ENCODE measurements at regions of chr3 and their contacts with region 1.

Region 1: DNA sequence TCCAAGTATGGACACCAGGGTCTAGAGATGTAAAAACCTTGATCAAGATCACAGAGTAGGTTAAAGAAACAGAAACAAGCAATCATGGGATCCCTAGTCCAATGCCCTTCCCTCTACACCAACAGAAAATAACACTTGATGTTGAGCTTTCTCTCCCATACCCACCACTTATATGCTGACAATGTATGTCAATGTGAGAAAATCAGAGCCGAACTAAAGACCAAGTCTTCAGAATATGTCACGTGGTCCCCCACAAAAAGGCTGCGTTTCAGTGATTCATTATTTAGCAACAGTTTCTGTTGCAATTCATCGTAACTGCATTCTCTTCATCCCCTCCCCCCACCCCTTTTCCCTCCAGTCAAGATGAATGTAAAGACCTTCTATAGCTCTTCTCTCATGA is 278.9 kb upstream of the STT3B start:
- DNase-seq: no peak
- H3K4me3 Mint-ChIP-seq: no peak overlapping the region
- H3K27ac Mint-ChIP-seq: peak overlapping the region; percentile 89
- H3K4me1 Mint-ChIP-seq: peaks cover 64% of the 10 kb centered on the region
- H3K27me3 Mint-ChIP-seq: peaks cover 3% of the 10 kb centered on the region

Region 2: DNA sequence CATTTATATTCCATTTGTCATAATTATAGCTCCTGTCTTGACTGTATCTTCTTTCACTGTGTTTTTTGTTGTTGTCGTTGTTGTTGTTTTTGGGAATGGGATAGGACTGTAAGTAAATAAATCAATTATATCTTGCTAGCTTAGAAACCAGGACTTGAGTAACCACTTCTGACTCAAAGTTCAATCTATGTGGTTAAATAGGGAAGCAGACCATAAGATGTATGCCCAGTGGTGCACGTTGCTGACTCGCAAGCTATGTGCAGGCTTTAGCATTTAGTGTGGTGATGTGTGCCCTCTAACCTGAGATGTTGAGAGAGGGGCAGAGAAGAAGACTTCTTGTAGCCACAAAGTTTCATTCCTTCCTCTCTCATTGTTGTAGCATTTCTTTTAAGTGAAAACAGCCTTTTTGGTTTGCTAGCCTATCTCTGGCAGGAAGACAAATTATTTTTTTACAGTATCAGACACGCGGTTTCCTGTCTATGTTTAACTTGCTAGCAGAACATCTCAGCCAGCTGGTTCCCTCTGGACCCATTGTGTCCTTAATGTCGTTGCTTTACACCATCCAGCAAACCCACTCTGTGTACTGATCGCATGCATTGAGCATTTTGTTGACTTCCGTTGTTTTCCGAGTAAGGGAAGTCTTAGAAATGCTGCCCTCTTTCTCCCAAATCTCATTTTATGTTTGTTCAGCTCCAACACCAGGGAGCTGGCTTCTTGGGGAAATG is 595.3 kb before region 1 on chr3:
- intact Hi-C with region 1: loop called (anchors 1 kb)
- DNase-seq: no peak
- H3K4me3 Mint-ChIP-seq: peak overlapping the region; percentile 85
- H3K27ac Mint-ChIP-seq: peak overlapping the region; percentile 96
- H3K4me1 Mint-ChIP-seq: peaks cover 97% of the 10 kb centered on the region
- H3K27me3 Mint-ChIP-seq: no peaks in the 10 kb centered on the region

Region 3: GRCh38 chr3:31213869-31214486 is 39.8 kb before region 1 on chr3:
- intact Hi-C with region 1: loop called (anchors 1 kb)
- DNase-seq: peak; percentile 53
- H3K4me3 Mint-ChIP-seq: peak overlapping the region; percentile 43
- H3K27ac Mint-ChIP-seq: peak overlapping the region; percentile 81
- H3K4me1 Mint-ChIP-seq: peaks cover 94% of the 10 kb centered on the region
- H3K27me3 Mint-ChIP-seq: no peaks in the 10 kb centered on the region

Region 4: GRCh38 chr3:31242026-31242960 is 11.5 kb before region 1 on chr3:
- intact Hi-C with region 1: loop called (anchors 1 kb)
- DNase-seq: no peak
- H3K4me3 Mint-ChIP-seq: no peak overlapping the region
- H3K27ac Mint-ChIP-seq: peak overlapping the region; percentile 86
- H3K4me1 Mint-ChIP-seq: peaks cover 23% of the 10 kb centered on the region
- H3K27me3 Mint-ChIP-seq: no peaks in the 10 kb centered on the region

Region 5: GRCh38 chr3:31356941-31357340 is 103.2 kb after region 1 on chr3:
- intact Hi-C with region 1: loop called (anchors 1 kb)
- DNase-seq: no peak
- H3K4me3 Mint-ChIP-seq: no peak overlapping the region
- H3K27ac Mint-ChIP-seq: peak overlapping the region; percentile 64
- H3K4me1 Mint-ChIP-seq: peaks cover 39% of the 10 kb centered on the region
- H3K27me3 Mint-ChIP-seq: no peaks in the 10 kb centered on the region

Region 6: DNA sequence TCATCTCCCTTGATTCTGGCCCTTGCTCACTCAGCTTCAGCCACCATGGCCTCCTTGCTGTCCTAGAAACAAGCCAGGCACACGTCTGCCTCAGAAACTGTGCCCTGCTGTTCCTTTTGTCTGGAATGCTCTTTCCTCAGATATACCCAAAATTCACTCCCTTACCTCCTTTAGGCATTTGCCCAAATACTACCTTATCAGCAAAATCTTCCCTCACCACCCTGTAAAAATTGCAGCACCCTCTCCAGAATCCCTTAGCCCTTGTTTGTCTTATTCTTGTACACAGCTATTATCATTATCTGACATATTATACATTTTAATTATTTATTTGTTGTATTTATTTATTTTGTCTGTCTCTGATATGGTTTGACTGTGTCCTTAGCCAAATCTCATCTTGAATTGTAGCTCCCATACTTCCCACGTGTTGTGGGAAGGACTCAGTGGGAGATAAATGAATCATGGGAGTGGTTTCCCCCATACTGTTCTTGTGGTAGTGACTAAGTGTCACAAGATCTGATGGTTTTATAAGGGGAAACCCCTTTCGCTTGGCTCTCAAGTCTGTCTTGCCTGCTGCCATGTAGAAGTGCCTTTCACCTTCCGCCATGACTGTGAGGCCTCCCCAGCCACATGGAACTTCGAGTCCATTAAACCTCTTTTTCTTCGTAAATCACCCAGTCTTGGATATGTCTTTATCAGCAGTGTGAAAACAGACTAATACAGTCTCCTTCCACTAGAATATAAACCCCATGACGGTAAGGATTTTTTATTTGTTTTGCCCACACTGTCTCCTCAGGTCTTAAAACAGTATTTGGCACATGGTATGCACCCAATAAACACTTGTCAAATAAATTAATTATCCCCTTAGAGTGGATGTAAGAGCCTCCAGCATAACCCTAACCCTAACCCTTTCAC is 219.0 kb after region 1 on chr3:
- intact Hi-C with region 1: loop called (anchors 1 kb)
- DNase-seq: peak; percentile 17
- H3K4me3 Mint-ChIP-seq: no peak overlapping the region
- H3K27ac Mint-ChIP-seq: peak overlapping the region; percentile 59
- H3K4me1 Mint-ChIP-seq: peaks cover 19% of the 10 kb centered on the region
- H3K27me3 Mint-ChIP-seq: peaks cover 9% of the 10 kb centered on the region